ENCODE measurements at regions of chr16 and their contacts with region 1.

Region 1: DNA sequence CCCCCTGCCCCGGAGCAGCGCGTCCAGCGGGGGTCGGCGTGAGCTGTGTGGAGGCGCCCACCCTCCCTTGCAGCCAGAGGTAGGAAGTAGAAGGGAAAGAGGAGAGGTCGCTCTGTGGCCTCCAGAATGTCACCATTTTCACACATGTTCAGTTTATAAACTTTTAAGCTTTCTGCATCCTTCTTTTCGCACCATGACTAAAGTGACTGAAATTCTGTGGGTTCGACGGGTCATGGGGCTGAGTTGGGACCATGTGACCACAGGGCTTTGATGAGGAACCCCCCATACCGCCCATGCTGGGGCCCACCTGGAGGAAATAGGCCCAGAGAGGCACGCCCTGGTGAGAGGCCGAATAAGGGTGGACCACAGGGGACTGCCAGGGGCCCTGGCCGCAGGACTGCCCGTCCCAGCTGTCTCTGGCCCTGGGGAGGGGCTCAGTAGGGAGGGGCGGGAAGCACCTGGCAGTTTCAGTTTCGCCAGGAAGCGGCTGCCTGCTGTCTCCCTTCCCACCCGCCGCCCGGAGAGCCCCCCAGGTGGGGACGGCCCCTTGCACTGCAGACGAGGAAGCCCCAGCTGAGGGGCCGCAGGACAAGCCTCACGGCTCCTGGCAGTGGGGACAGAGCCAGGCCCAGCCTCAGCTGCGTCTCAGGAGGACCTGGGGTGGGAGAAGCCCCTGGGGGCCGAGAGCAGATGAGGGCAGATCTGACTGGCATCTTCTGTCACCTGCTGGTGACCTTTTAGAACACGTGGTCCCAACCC is 9.0 kb downstream of the CBFA2T3 start:
- DNase-seq: peak; percentile 65
- ATAC-seq: peak; percentile 64
- H3K4me3 ChIP-seq: peak overlapping the region; percentile 59; the same call in 1 of the 2 replicates
- H3K27ac ChIP-seq: peak overlapping the region; percentile 89
- H3K4me1 ChIP-seq: peaks cover 74% of the 10 kb centered on the region
- H3K27me3 ChIP-seq: no peaks in the 10 kb centered on the region; a peak in 1 of 4 replicates
- CTCF ChIP-seq: no peak
- EP300 ChIP-seq: peak; percentile 64 to 82
- POLR2A ChIP-seq: no peak
- RAD21 ChIP-seq: no peak; the same call in 1 of the 2 replicates

Region 2: DNA sequence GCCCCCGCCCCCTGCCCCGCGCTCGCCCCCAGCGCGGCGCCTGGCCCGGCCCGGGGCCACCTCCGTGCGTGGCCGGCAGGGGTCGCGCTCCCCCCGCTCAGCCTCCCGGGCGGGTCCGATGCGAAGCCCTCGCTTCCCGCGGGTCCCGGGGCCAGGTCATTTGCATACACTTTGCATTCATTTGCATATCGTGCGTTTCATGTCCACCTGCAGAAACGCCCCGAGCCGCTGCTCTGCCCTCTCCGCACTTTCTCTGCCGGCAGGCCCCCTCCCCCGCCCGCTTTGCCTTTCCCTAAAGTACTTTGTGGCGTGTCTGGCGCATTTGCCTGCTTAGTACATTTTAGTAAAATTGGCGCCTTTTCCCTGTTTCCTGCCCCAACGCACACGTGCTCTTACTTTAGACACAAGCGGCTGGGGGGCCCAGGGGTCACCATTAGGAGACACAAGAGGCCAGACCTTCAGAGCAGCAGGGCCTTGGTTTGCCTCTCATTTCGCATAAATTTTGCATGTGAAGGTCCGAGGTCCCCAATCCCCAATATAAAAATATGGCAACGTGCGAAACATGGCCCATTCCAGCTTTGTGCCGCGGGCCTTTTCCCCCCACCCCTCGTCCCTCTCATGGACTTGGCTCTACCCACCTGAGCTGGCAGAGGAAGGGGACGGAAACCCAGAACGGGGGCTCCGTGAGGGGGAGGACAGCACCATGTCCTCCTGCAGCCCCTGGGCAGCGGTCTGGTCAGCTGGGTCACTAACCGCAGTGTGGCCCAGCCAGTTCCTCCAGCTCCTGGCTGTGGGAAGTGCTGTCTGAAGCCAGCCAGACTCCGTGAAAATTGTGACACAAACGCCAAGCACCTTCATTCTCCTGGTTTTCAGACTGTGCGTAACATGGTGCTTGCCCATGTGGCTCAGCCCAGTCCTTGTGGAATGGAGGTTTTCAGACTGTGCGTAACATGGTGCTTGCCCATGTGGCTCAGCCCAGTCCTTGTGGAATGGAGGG is 25.8 kb before region 1 on chr16:
- CTCF ChIA-PET with region 1: interaction called, 5 read pairs
- POLR2A ChIA-PET with region 1: interaction called, 5 read pairs
- RAD21 ChIA-PET with region 1: interaction called, 8 read pairs
- SMC1A ChIA-PET with region 1: no interaction called
- in situ Hi-C with region 1: no loop called
- intact Hi-C with region 1: loop called (anchors 5 kb)
- DNase-seq: no peak
- ATAC-seq: peak; percentile 76
- H3K4me3 ChIP-seq: peak overlapping the region; percentile 64
- H3K27ac ChIP-seq: no peak overlapping the region; the same call in 1 of the 2 replicates
- H3K4me1 ChIP-seq: peaks cover 27% of the 10 kb centered on the region
- H3K27me3 ChIP-seq: peaks cover 0 to 1% of the 10 kb centered on the region in 2 experiments; a peak in 1 of 4 replicates
- CTCF ChIP-seq: peak; percentile 66 to 76 (median 66); a peak in 5 of 6 replicates
- EP300 ChIP-seq: no peak
- POLR2A ChIP-seq: no peak
- RAD21 ChIP-seq: peak; percentile 88

Region 3: GRCh38 chr16:88983771-88984687 is 16.0 kb after region 1 on chr16:
- CTCF ChIA-PET with region 1: interaction called, 11 read pairs
- POLR2A ChIA-PET with region 1: interaction called, 30 read pairs
- RAD21 ChIA-PET with region 1: interaction called, 37 read pairs
- SMC1A ChIA-PET with region 1: interaction called, 12 read pairs
- in situ Hi-C with region 1: no loop called
- intact Hi-C with region 1: no loop called
- DNase-seq: no peak
- ATAC-seq: peak; percentile 73
- H3K4me3 ChIP-seq: no peak overlapping the region
- H3K27ac ChIP-seq: peak overlapping the region; percentile 51
- H3K4me1 ChIP-seq: peaks cover 50% of the 10 kb centered on the region
- H3K27me3 ChIP-seq: no peaks in the 10 kb centered on the region
- CTCF ChIP-seq: no peak
- EP300 ChIP-seq: peak in 1 of 2 experiments; percentile 26; a peak in 1 of 4 replicates
- POLR2A ChIP-seq: no peak; the same call in 1 of the 2 replicates
- RAD21 ChIP-seq: no peak

Region 4: GRCh38 chr16:89084411-89084810 is 116.4 kb after region 1 on chr16:
- CTCF ChIA-PET with region 1: no interaction called
- POLR2A ChIA-PET with region 1: no interaction called
- RAD21 ChIA-PET with region 1: no interaction called
- SMC1A ChIA-PET with region 1: no interaction called
- in situ Hi-C with region 1: no loop called
- intact Hi-C with region 1: no loop called
- DNase-seq: no peak
- ATAC-seq: no peak
- H3K4me3 ChIP-seq: no peak overlapping the region
- H3K27ac ChIP-seq: no peak overlapping the region
- H3K4me1 ChIP-seq: no peaks in the 10 kb centered on the region
- H3K27me3 ChIP-seq: peaks cover 0 to under 1% of the 10 kb centered on the region in 2 experiments; a peak in 1 of 4 replicates
- CTCF ChIP-seq: no peak
- EP300 ChIP-seq: no peak
- POLR2A ChIP-seq: no peak
- RAD21 ChIP-seq: no peak

Region 5: DNA sequence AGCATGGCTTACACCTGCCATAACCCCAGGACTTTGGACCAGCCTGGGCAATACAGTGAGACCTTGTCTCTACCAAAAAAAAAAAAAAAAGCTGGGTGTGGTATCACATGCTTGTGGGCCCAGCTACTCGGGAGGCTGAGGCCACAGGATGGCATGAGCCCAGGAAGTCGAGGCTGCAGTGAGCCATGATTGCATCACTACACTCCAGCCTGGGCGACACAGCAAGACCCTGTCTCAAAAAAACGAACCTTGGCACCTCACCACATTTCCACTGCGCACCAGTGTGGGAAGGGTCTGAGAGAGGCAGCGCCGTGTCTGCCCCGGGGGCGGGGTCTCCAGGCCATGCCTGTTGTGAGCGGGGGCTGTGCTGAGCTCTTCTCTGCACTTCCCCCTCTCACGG is 131.9 kb after region 1 on chr16:
- CTCF ChIA-PET with region 1: interaction called, 5 read pairs
- POLR2A ChIA-PET with region 1: interaction called, 4 read pairs
- RAD21 ChIA-PET with region 1: interaction called, 20 read pairs
- SMC1A ChIA-PET with region 1: interaction called, 6 read pairs
- in situ Hi-C with region 1: no loop called
- intact Hi-C with region 1: loop called (anchors 2 kb)
- DNase-seq: no peak
- ATAC-seq: no peak
- H3K4me3 ChIP-seq: no peak overlapping the region
- H3K27ac ChIP-seq: no peak overlapping the region
- H3K4me1 ChIP-seq: peaks cover 36% of the 10 kb centered on the region
- H3K27me3 ChIP-seq: no peaks in the 10 kb centered on the region
- CTCF ChIP-seq: no peak
- EP300 ChIP-seq: no peak
- POLR2A ChIP-seq: no peak
- RAD21 ChIP-seq: no peak